ENCODE measurements at regions of chr16 and their contacts with region 1.

Region 1: GRCh38 chr16:56203052-56203451 is 11.8 kb downstream of the GNAO1 start:
- DNase-seq: peak; percentile 74
- ATAC-seq: peak; percentile 89
- H3K4me3 ChIP-seq: peak overlapping the region in 1 of 5 experiments; percentile 18
- H3K4me3 Mint-ChIP-seq: no peak overlapping the region
- H3K27ac ChIP-seq: no peak overlapping the region
- H3K27ac Mint-ChIP-seq: no peak overlapping the region
- H3K4me1 ChIP-seq: peaks cover 20 to 44% of the 10 kb centered on the region in 2 donors
- H3K4me1 Mint-ChIP-seq: peaks cover 23% of the 10 kb centered on the region
- H3K27me3 ChIP-seq: no peaks in the 10 kb centered on the region
- H3K27me3 Mint-ChIP-seq: peaks cover 4% of the 10 kb centered on the region
- CTCF ChIP-seq: peak; percentile 69

Region 2: GRCh38 chr16:55944377-55944802 is 258.7 kb before region 1 on chr16:
- CTCF ChIA-PET with region 1: interaction called, 88 read pairs
- POLR2A ChIA-PET with region 1: no interaction called
- intact Hi-C with region 1: no loop called
- DNase-seq: peak; percentile 58
- ATAC-seq: peak; percentile 43
- H3K4me3 ChIP-seq: no peak overlapping the region
- H3K4me3 Mint-ChIP-seq: no peak overlapping the region
- H3K27ac ChIP-seq: no peak overlapping the region
- H3K27ac Mint-ChIP-seq: no peak overlapping the region
- H3K4me1 ChIP-seq: no peaks in the 10 kb centered on the region
- H3K4me1 Mint-ChIP-seq: peaks cover 4% of the 10 kb centered on the region
- H3K27me3 ChIP-seq: peaks cover 0 to 19% (median 6%) of the 10 kb centered on the region in 4 experiments
- H3K27me3 Mint-ChIP-seq: peaks cover 39% of the 10 kb centered on the region
- CTCF ChIP-seq: peak; percentile 96

Region 3: GRCh38 chr16:56041686-56042085 is 161.4 kb before region 1 on chr16:
- CTCF ChIA-PET with region 1: interaction called, 9 read pairs
- POLR2A ChIA-PET with region 1: no interaction called
- intact Hi-C with region 1: loop called (anchors 2 kb)
- DNase-seq: peak; percentile 35
- ATAC-seq: no peak
- H3K4me3 ChIP-seq: no peak overlapping the region
- H3K4me3 Mint-ChIP-seq: no peak overlapping the region
- H3K27ac ChIP-seq: no peak overlapping the region
- H3K27ac Mint-ChIP-seq: no peak overlapping the region
- H3K4me1 ChIP-seq: no peaks in the 10 kb centered on the region
- H3K4me1 Mint-ChIP-seq: no peaks in the 10 kb centered on the region
- H3K27me3 ChIP-seq: peaks cover 0 to 3% (median 2%) of the 10 kb centered on the region in 4 experiments
- H3K27me3 Mint-ChIP-seq: peaks cover 20% of the 10 kb centered on the region
- CTCF ChIP-seq: peak; percentile 17

Region 4: GRCh38 chr16:56048425-56049105 is 154.5 kb before region 1 on chr16:
- CTCF ChIA-PET with region 1: interaction called, 5 read pairs
- POLR2A ChIA-PET with region 1: no interaction called
- intact Hi-C with region 1: loop called (anchors 2 kb)
- DNase-seq: peak; percentile 73
- ATAC-seq: peak; percentile 87
- H3K4me3 ChIP-seq: peak overlapping the region in 1 of 5 experiments; percentile 8
- H3K4me3 Mint-ChIP-seq: peak overlapping the region; percentile 14
- H3K27ac ChIP-seq: peak overlapping the region; percentile 11 to 56
- H3K27ac Mint-ChIP-seq: peak overlapping the region; percentile 34
- H3K4me1 ChIP-seq: peaks cover 12 to 20% of the 10 kb centered on the region in 2 donors
- H3K4me1 Mint-ChIP-seq: peaks cover 12% of the 10 kb centered on the region
- H3K27me3 ChIP-seq: no peaks in the 10 kb centered on the region
- H3K27me3 Mint-ChIP-seq: peaks cover 6% of the 10 kb centered on the region
- CTCF ChIP-seq: no peak

Region 5: GRCh38 chr16:56317998-56318826 is 115.2 kb after region 1 on chr16:
- CTCF ChIA-PET with region 1: interaction called, 3 read pairs
- POLR2A ChIA-PET with region 1: no interaction called
- intact Hi-C with region 1: loop called (anchors 5 kb)
- DNase-seq: peak; percentile 75
- ATAC-seq: peak; percentile 98
- H3K4me3 ChIP-seq: peak overlapping the region in 2 of 5 experiments; percentile 12 to 15
- H3K4me3 Mint-ChIP-seq: peak overlapping the region; percentile 39
- H3K27ac ChIP-seq: no peak overlapping the region
- H3K27ac Mint-ChIP-seq: no peak overlapping the region
- H3K4me1 ChIP-seq: peaks cover 3 to 11% of the 10 kb centered on the region in 2 donors
- H3K4me1 Mint-ChIP-seq: peaks cover 13% of the 10 kb centered on the region
- H3K27me3 ChIP-seq: peaks cover 0 to 5% (median 0%) of the 10 kb centered on the region in 4 experiments
- H3K27me3 Mint-ChIP-seq: peaks cover 9% of the 10 kb centered on the region
- CTCF ChIP-seq: peak; percentile 98

Region 6: GRCh38 chr16:57316390-57317017 is 1113.5 kb after region 1 on chr16:
- CTCF ChIA-PET with region 1: no interaction called
- POLR2A ChIA-PET with region 1: no interaction called
- intact Hi-C with region 1: no loop called
- DNase-seq: no peak
- ATAC-seq: no peak
- H3K4me3 ChIP-seq: no peak overlapping the region
- H3K4me3 Mint-ChIP-seq: no peak overlapping the region
- H3K27ac ChIP-seq: no peak overlapping the region
- H3K27ac Mint-ChIP-seq: no peak overlapping the region
- H3K4me1 ChIP-seq: peaks cover 6% of the 10 kb centered on the region in 2 donors
- H3K4me1 Mint-ChIP-seq: peaks cover 11% of the 10 kb centered on the region
- H3K27me3 ChIP-seq: no peaks in the 10 kb centered on the region
- H3K27me3 Mint-ChIP-seq: peaks cover 4% of the 10 kb centered on the region
- CTCF ChIP-seq: no peak